H1 (cell line): ENCODE measurements at regions of chr17 and their contacts with region 1.

Region 1: DNA sequence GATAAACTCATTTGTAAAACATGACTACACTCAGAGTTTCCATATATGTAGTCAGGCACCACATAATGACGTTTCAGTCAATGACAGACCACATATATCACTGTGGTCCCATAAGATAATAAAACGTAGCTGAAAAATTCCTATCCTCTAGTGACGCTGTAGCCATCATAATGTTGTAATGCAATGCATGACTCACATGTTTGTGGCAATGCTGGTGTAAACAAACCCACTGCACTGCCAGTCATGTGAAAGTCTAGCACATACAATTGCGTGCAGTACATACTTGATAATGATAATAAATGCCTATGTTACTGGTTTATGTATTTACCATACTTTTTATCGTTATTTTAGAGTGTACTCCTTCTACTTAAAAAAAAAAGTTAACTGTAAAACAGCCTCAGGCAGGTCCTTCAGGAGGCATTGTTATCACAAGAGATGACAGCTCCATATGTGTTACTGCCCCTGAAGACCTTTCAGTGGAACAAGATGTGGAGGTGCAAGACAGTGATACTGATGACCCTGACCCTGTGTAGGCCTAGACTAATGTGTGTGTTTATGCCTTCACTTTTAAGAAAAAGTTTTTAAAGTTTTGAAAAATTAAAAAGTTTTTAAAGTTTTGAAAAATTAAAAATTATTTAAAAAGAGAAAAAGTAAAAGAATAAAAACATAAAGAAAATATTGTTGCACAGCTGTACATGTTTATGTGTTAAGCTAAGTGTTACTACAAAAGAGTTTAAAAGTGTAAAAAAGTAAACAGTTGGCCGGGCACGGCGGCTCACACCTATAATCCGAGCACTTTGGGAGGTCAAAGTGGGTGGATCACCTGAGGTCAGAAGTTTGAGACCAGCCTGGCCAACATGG is 9.0 kb downstream of the STAT5B start:
- DNase-seq: no peak
- H3K4me3 ChIP-seq: no peak overlapping the region
- H3K27ac ChIP-seq: no peak overlapping the region
- H3K4me1 ChIP-seq: peaks cover 0 to 5% (median under 1%) of the 10 kb centered on the region in 4 experiments; a peak in 2 of 7 replicates
- H3K27me3 ChIP-seq: no peaks in the 10 kb centered on the region
- CTCF ChIP-seq: no peak
- EP300 ChIP-seq: no peak
- POLR2A ChIP-seq: no peak
- RAD21 ChIP-seq: no peak

Region 2: DNA sequence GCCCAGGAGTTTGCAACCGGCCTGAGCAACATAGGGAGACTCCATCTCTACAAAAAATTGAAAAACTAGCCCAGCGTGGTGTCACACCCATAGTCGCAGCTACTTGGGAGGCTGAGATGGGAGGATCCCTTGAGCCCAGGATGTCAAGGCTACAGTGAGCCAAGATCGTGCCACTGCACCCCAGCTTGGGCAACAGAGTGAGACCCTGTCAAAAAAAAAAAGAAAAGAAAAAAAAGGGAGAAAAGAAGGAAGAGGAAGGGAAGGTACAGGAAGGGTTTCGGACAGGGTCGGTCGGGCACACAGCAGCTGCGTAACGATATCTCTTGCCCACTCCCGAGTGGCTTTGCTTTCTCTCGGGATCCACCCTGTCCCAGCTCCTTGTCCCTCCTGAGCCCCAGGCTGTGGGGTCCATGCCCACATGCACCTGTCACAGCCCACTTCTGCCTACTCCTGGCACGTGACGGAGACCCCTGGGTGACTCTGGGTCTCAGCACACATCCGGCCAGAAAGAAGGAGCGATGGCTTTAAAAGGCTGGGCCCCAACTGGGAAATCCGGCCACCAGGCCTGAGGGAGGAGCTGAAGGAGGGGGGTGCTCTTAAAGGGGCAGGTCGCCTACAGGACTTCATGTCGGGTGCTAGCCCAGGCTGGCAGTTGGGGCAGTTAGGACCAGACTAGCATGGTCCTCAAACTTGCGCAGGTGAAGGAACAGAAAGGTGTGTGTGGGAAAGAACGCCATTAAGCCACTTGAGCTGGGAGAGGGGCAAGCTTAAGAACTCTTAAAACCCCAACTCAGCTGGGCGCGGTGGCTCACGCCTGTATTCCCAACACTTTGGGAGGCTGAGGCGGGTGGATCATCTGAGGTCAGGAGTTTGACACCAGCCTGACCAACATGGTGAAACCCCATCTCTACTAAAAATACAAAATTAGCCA is 72.9 kb before region 1 on chr17 and contains the start of gene GHDC:
- CTCF ChIA-PET with region 1: no interaction called
- POLR2A ChIA-PET with region 1: no interaction called
- DNase-seq: peak in 1 of 2 experiments; percentile 74
- H3K4me3 ChIP-seq: peak within 1 kb of the TSS in 3 of 4 experiments; percentile 16 to 52 (median 19); a peak in 5 of 8 replicates
- H3K27ac ChIP-seq: no peak within 1 kb of the TSS
- H3K4me1 ChIP-seq: peaks cover 0 to 4% (median 3%) of the 10 kb centered on the region in 4 experiments; a peak in 5 of 7 replicates
- H3K27me3 ChIP-seq: no peaks in the 10 kb centered on the region
- CTCF ChIP-seq: no peak
- EP300 ChIP-seq: no peak
- POLR2A ChIP-seq: no peak
- RAD21 ChIP-seq: no peak
- total RNA-seq, gene GHDC: 7.1 and 7.4 TPM in 2 replicates

Region 3: DNA sequence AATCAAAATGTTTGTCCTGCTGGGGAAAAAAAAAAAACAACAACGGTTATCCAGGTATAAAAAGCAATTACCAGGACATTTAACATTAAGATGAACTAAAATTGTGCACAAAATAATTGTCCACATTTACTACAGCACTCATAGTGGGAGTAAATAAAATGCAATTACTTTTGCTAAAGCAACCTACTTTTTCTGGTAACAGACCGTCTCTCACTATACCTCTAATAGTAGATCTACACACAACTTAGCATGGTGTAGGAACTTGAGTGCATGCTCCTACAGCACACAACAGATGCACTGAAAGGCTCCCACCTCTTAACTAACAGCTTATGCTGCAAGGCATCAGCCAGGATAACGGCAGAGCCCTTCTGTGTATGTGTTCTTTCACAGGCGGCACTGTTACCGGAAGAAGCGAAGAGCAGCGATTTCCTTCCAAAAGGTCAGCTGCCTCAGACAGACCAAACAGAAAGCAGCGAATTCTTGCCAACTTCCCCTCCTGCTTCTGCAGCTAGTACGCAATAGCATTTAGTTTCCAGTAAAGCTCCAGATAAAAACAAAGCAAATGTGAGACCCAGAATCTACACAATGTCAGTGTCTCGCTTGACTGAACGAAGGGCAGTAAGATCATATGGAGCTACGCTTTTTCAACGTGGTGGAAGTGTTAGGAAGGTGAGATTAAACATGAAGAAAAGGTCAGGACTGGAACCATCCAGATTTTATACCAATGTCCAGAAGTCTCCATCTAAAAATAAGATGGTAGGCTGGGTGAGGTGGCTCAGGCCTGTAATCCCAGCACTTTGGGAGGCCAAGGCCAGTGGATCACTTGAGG is 18.6 kb before region 1 on chr17:
- CTCF ChIA-PET with region 1: interaction called, 14 read pairs
- POLR2A ChIA-PET with region 1: interaction called, 3 read pairs
- DNase-seq: no peak
- H3K4me3 ChIP-seq: no peak overlapping the region
- H3K27ac ChIP-seq: peak overlapping the region; percentile 11; the same call in 1 of the 2 replicates
- H3K4me1 ChIP-seq: peaks cover 0 to 3% (median 2%) of the 10 kb centered on the region in 4 experiments; a peak in 5 of 7 replicates
- H3K27me3 ChIP-seq: no peaks in the 10 kb centered on the region
- CTCF ChIP-seq: no peak
- EP300 ChIP-seq: no peak
- POLR2A ChIP-seq: no peak
- RAD21 ChIP-seq: no peak

Region 4: DNA sequence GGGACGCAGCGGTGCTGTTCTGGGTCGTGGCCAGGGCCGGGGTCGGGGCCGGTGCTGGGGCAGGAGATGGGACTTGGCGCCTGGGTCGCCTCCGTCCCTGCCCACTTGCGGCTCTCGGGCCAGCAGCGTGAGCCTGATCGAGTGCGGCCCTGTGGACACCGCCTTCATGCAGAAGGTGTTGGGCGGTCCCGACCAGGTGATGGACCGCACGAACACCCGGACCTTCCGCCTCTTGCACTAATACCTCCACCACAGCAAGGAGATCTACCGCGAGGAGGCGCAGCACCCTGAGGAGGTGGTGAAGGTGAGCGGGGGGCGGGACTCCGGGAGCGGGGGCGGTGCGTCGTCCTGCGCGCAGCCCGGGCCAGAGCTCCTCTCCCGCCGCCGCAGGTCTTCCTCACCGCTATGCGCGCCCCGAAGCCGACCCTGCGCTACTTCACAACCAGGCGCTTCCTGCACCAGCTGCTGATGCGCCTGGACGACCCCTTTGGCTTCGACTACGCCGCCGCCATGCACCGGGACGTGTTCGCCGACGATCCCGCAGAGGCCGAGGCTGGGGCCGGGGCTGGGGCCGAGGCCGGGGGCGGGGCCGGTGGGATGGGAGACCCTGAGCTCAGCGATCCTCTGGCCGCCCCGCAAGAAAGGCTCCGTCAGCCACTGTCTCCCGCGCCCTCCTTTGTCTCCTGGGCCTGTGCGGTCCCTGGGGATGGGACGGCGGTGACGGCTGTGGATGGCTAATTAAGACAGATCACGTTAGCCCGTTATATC is 281.1 kb after region 1 on chr17:
- CTCF ChIA-PET with region 1: no interaction called
- POLR2A ChIA-PET with region 1: no interaction called
- DNase-seq: peak; percentile 82 to 97
- H3K4me3 ChIP-seq: peak overlapping the region; percentile 31 to 61 (median 37)
- H3K27ac ChIP-seq: no peak overlapping the region
- H3K4me1 ChIP-seq: peaks cover 0 to 8% (median 7%) of the 10 kb centered on the region in 4 experiments; a peak in 5 of 7 replicates
- H3K27me3 ChIP-seq: no peaks in the 10 kb centered on the region
- CTCF ChIP-seq: peak; percentile 75 to 89 (median 77)
- EP300 ChIP-seq: no peak
- POLR2A ChIP-seq: peak; percentile 57 to 62; a peak in 2 of 3 replicates
- RAD21 ChIP-seq: peak; percentile 36 to 48